ENCODE measurements at regions of chr16 and their contacts with region 1.

Region 1: DNA sequence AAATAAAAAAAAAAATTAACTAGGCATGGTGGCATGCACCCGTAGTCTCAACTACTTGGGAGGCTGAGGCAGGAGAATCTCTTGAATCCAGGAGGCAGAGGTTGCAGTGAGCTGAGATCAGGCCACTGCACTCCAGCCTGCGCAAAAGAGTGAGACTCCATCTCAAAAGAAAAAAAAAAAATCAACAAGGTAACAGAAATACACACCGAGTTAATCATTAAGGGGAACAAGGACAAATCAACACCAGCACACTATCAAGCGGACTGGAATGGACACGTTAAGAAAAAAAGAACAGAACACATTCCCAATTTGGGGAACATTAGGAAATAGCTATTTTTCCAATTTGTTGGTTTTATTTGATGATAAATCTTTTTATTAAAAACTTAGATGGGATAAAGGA is 28.4 kb upstream of the GLG1 start:
- DNase-seq: no peak
- H3K4me3 ChIP-seq: no peak overlapping the region
- H3K27me3 ChIP-seq: no peaks in the 10 kb centered on the region
- CTCF ChIP-seq: no peak

Region 2: GRCh38 chr16:74573622-74574021 is 61.7 kb before region 1 on chr16:
- CTCF ChIA-PET with region 1: no interaction called
- POLR2A ChIA-PET with region 1: interaction called, 12 read pairs
- DNase-seq: no peak
- H3K4me3 ChIP-seq: no peak overlapping the region
- H3K27me3 ChIP-seq: no peaks in the 10 kb centered on the region
- CTCF ChIP-seq: no peak